ENCODE measurements at regions of chr9 and their contacts with region 1.

Region 1: GRCh38 chr9:131739980-131740648 is at the start of gene RAPGEF1:
- DNase-seq: peak; percentile 86
- H3K4me3 Mint-ChIP-seq: peak within 1 kb of the TSS; percentile 91
- H3K27ac Mint-ChIP-seq: peak within 1 kb of the TSS; percentile 90
- H3K4me1 Mint-ChIP-seq: peaks cover 49% of the 10 kb centered on the region
- H3K27me3 Mint-ChIP-seq: no peaks in the 10 kb centered on the region
- total RNA-seq, gene RAPGEF1: 91.9 to 92.3 TPM

Region 2: DNA sequence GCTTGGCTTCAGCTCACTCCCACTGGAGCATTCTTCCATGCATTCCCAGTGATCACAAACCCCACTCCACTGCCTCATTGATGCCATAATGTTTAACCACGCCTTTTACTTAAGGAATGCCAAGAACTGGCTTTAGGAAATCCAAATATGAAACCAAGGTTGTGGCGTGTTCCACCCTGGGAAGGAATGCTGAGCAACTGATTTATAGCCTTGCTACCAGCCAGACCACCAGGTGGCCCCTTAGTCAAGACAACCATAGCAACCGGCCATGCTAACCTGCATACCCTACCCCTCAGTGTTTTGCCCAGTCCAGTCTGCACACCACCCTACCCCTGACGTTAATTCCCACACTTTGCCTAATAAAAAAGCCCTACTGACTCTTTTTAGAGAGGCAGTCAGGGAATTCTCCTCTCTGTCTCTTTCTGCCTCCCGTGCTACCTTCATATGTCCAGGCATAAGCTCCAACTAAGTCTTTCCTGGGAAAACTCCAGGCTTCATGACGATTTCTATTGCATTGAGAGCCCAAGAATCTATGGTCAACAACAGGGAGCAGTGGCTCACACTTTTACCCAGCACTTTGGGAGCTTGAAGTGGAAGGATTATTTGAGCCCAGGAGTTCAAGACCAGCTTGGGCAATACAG is 373.2 kb before region 1 on chr9:
- CTCF ChIA-PET with region 1: no interaction called
- POLR2A ChIA-PET with region 1: interaction called, 3 read pairs
- intact Hi-C with region 1: loop called (anchors 5 kb)
- DNase-seq: no peak
- H3K4me3 Mint-ChIP-seq: no peak overlapping the region
- H3K27ac Mint-ChIP-seq: no peak overlapping the region
- H3K4me1 Mint-ChIP-seq: peaks cover 1% of the 10 kb centered on the region
- H3K27me3 Mint-ChIP-seq: no peaks in the 10 kb centered on the region

Region 3: DNA sequence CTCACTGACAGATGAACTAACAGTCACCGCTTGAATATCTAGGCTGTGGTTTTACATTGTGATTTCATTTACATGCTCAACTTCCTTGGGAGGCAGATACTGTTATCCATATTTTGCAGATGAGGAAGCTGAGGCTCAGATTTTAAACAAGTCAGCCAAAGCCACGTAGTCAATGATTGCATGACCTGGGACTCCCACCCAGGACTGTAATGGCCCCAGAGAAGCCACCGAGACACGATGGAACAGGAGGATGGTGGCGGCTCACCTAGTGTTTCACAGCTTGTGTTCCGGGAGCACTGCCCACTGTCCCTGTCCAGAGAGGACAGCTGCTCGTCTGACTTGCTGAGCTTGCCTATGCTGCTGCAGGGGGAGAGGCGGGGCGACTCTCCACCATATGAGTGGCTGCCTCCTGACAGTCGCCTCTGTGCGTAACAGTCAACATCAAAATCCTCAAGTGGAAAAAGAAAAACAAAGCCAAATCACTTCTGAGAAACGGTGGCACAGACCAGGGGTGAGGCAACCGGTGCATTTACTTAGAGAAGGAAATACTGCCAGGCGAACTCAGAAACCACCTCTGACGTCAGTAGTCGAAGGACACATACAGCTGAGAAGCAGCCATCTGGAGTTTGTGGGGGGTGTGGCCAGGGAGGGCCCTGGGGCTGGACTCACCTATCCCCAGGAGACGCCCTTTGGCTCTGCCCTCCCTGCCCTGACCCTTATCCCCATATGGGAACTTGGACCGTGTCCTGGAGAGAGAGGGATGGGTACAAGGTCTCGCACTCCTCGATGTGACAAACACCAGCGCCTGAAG is 112.3 kb before region 1 on chr9:
- CTCF ChIA-PET with region 1: interaction called, 20 read pairs
- POLR2A ChIA-PET with region 1: interaction called, 4 read pairs
- intact Hi-C with region 1: no loop called
- DNase-seq: peak; percentile 70
- H3K4me3 Mint-ChIP-seq: no peak overlapping the region
- H3K27ac Mint-ChIP-seq: peak overlapping the region; percentile 80
- H3K4me1 Mint-ChIP-seq: peaks cover 49% of the 10 kb centered on the region
- H3K27me3 Mint-ChIP-seq: no peaks in the 10 kb centered on the region

Region 4: DNA sequence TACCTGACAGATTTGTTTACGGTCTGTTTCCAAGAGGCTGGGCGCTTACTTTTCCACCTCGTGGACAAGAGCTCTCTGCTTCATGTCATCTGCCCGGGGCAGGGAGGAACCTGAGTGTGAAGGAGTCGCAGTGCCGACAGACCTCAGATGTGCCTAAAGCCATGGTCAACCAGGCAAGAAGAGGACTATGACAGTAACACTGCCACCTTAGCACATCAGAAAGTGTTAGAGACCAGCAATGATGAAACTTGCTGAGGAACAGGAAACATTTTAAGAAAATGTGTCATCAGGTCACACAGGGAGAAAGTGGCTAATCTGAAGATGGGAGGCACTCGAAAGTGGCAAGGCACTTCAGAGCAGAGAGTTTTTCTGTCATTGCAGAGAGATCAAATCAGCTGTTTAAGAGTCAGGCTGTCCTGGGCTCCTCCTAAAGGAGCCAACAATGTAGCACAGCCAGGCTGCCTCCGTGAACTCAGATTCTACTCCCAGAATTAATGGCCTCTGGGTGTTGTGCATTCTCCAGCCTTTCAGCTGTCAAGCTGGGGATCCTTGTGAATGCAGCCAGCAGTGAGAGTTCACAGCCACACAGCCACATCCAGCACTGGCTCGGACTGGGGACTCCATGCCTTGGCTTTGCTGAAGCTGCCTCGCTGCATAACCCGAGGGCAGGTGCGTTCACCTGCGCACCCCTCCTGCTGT is 94.9 kb before region 1 on chr9:
- CTCF ChIA-PET with region 1: interaction called, 31 read pairs
- POLR2A ChIA-PET with region 1: interaction called, 4 read pairs
- intact Hi-C with region 1: no loop called
- DNase-seq: peak; percentile 65
- H3K4me3 Mint-ChIP-seq: peak overlapping the region; percentile 43
- H3K27ac Mint-ChIP-seq: peak overlapping the region; percentile 94
- H3K4me1 Mint-ChIP-seq: peaks cover 68% of the 10 kb centered on the region
- H3K27me3 Mint-ChIP-seq: no peaks in the 10 kb centered on the region

Region 5: GRCh38 chr9:131809941-131810344 is 69.8 kb after region 1 on chr9:
- CTCF ChIA-PET with region 1: no interaction called
- POLR2A ChIA-PET with region 1: no interaction called
- intact Hi-C with region 1: no loop called
- DNase-seq: no peak
- H3K4me3 Mint-ChIP-seq: no peak overlapping the region
- H3K27ac Mint-ChIP-seq: no peak overlapping the region
- H3K4me1 Mint-ChIP-seq: no peaks in the 10 kb centered on the region
- H3K27me3 Mint-ChIP-seq: peaks cover 29% of the 10 kb centered on the region

Region 6: GRCh38 chr9:131954299-131954698 is 214.2 kb after region 1 on chr9:
- CTCF ChIA-PET with region 1: no interaction called
- POLR2A ChIA-PET with region 1: no interaction called
- intact Hi-C with region 1: no loop called
- DNase-seq: no peak
- H3K4me3 Mint-ChIP-seq: no peak overlapping the region
- H3K27ac Mint-ChIP-seq: no peak overlapping the region
- H3K4me1 Mint-ChIP-seq: no peaks in the 10 kb centered on the region
- H3K27me3 Mint-ChIP-seq: no peaks in the 10 kb centered on the region